ENCODE measurements at regions of chr10 and their contacts with region 1.

Region 1: DNA sequence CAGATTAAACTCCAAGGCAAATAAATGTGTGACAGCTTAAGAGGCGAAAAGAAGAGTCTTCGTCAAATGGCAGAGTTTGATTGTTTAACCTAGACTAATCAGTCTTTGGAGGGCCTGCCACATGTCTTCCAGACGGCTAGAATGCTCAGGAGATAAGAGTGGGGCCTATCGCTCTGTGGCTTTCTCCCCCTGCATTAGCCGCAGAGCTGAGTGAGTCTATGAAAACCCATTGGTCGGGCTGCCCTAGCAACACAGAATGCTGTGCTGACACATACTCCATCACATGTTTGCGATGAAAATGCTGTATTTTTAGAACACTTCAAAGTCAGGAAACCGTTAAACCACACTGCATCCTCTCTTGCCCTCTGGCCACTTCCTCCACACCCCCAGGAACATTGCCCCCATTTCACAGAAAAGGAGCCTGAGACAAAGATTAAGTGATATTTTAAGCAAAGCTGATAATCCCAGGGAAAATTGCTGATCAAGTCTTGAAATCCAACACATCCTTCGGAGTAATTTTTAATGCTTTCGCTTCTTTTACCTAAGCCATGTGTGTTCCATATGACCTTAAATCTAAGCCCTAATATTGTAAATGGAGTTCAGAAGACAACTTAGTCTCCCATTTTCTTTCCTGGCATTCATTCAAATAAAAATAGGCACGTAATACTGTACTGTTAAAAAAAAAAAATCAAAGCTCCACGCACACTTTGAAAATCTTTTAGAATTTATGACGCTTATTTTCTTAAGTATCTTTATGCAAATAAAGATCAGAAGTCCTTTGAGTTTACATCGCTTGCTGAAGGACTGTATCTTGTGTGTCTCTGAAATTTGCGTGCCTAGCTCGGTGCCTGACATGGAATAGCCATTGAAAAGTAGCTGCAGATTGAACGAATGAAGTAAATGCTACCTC is 161.2 kb downstream of the CELF2 start:
- DNase-seq: peak; percentile 68 to 96 (median 76)
- ATAC-seq: peak; percentile 72
- H3K4me3 ChIP-seq: peak overlapping the region; percentile 39
- H3K4me3 Mint-ChIP-seq: peak overlapping the region; percentile 86
- H3K27ac ChIP-seq: peak overlapping the region; percentile 75 to 84
- H3K27ac Mint-ChIP-seq: no peak overlapping the region
- H3K4me1 ChIP-seq: peaks cover 91% of the 10 kb centered on the region
- H3K4me1 Mint-ChIP-seq: peaks cover 30% of the 10 kb centered on the region
- H3K27me3 ChIP-seq: no peaks in the 10 kb centered on the region
- H3K27me3 Mint-ChIP-seq: no peaks in the 10 kb centered on the region
- CTCF ChIP-seq: no peak

Region 2: GRCh38 chr10:11074536-11075267 is 104.2 kb before region 1 on chr10:
- CTCF ChIA-PET with region 1: no interaction called
- POLR2A ChIA-PET with region 1: no interaction called
- intact Hi-C with region 1: no loop called
- DNase-seq: no peak
- ATAC-seq: no peak
- H3K4me3 ChIP-seq: no peak overlapping the region
- H3K4me3 Mint-ChIP-seq: no peak overlapping the region
- H3K27ac ChIP-seq: no peak overlapping the region
- H3K27ac Mint-ChIP-seq: no peak overlapping the region
- H3K4me1 ChIP-seq: no peaks in the 10 kb centered on the region
- H3K4me1 Mint-ChIP-seq: no peaks in the 10 kb centered on the region
- H3K27me3 ChIP-seq: no peaks in the 10 kb centered on the region
- H3K27me3 Mint-ChIP-seq: no peaks in the 10 kb centered on the region
- CTCF ChIP-seq: no peak

Region 3: DNA sequence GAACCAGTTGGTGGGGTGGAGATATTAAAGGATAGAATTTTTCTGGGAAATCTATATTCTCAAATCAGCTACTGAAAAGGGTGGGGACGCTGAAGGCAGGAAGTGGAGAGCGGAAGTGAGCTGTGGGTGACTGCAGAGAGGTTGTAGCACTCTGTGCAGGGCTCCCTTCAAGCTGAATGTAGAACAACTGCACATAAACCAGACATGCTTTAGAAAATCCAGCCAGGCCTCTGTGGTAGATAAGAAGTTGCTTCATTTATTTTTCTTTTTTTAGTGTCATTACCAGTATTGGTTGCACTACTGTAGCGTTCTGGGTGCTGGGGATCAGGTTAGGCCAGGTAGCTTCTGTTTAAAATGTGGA is 33.4 kb before region 1 on chr10:
- CTCF ChIA-PET with region 1: interaction called, 10 read pairs
- POLR2A ChIA-PET with region 1: interaction called, 1,077 read pairs
- intact Hi-C with region 1: loop called in 1 of 2 experiments (anchors 1 kb)
- DNase-seq: peak; percentile 47 to 89 (median 64)
- ATAC-seq: peak; percentile 63
- H3K4me3 ChIP-seq: peak overlapping the region; percentile 15
- H3K4me3 Mint-ChIP-seq: peak overlapping the region; percentile 73
- H3K27ac ChIP-seq: peak overlapping the region; percentile 89 to 91
- H3K27ac Mint-ChIP-seq: peak overlapping the region; percentile 97
- H3K4me1 ChIP-seq: peaks cover 94% of the 10 kb centered on the region
- H3K4me1 Mint-ChIP-seq: peaks cover 97% of the 10 kb centered on the region
- H3K27me3 ChIP-seq: no peaks in the 10 kb centered on the region
- H3K27me3 Mint-ChIP-seq: no peaks in the 10 kb centered on the region
- CTCF ChIP-seq: no peak

Region 4: GRCh38 chr10:11209830-11210181 is 30.9 kb after region 1 on chr10:
- CTCF ChIA-PET with region 1: interaction called, 4 read pairs
- POLR2A ChIA-PET with region 1: interaction called, 18 read pairs
- intact Hi-C with region 1: loop called in 1 of 2 experiments (anchors 5 kb)
- DNase-seq: peak in 2 of 14 experiments; percentile 51 to 58
- ATAC-seq: peak; percentile 11
- H3K4me3 ChIP-seq: peak overlapping the region; percentile 22
- H3K4me3 Mint-ChIP-seq: peak overlapping the region; percentile 82
- H3K27ac ChIP-seq: peak overlapping the region; percentile 43 to 60
- H3K27ac Mint-ChIP-seq: peak overlapping the region; percentile 81
- H3K4me1 ChIP-seq: peaks cover 84% of the 10 kb centered on the region
- H3K4me1 Mint-ChIP-seq: peaks cover 98% of the 10 kb centered on the region
- H3K27me3 ChIP-seq: no peaks in the 10 kb centered on the region
- H3K27me3 Mint-ChIP-seq: no peaks in the 10 kb centered on the region
- CTCF ChIP-seq: no peak

Region 5: GRCh38 chr10:11236234-11236633 is 57.4 kb after region 1 on chr10:
- CTCF ChIA-PET with region 1: interaction called, 3 read pairs
- POLR2A ChIA-PET with region 1: interaction called, 8 read pairs
- intact Hi-C with region 1: loop called in 1 of 2 experiments (anchors 2 kb)
- DNase-seq: peak in 5 of 14 experiments; percentile 23 to 71 (median 61)
- ATAC-seq: peak; percentile 76
- H3K4me3 ChIP-seq: no peak overlapping the region
- H3K4me3 Mint-ChIP-seq: peak overlapping the region; percentile 51
- H3K27ac ChIP-seq: peak overlapping the region; percentile 43 to 47
- H3K27ac Mint-ChIP-seq: no peak overlapping the region
- H3K4me1 ChIP-seq: peaks cover 63% of the 10 kb centered on the region
- H3K4me1 Mint-ChIP-seq: peaks cover 68% of the 10 kb centered on the region
- H3K27me3 ChIP-seq: no peaks in the 10 kb centered on the region
- H3K27me3 Mint-ChIP-seq: no peaks in the 10 kb centered on the region
- CTCF ChIP-seq: no peak

Region 6: GRCh38 chr10:11560076-11560709 is 381.3 kb after region 1 on chr10:
- CTCF ChIA-PET with region 1: no interaction called
- POLR2A ChIA-PET with region 1: no interaction called
- intact Hi-C with region 1: no loop called
- DNase-seq: peak in 3 of 14 experiments; percentile 3 to 31 (median 30)
- ATAC-seq: no peak
- H3K4me3 ChIP-seq: no peak overlapping the region
- H3K4me3 Mint-ChIP-seq: no peak overlapping the region
- H3K27ac ChIP-seq: no peak overlapping the region
- H3K27ac Mint-ChIP-seq: no peak overlapping the region
- H3K4me1 ChIP-seq: no peaks in the 10 kb centered on the region
- H3K4me1 Mint-ChIP-seq: no peaks in the 10 kb centered on the region
- H3K27me3 ChIP-seq: no peaks in the 10 kb centered on the region
- H3K27me3 Mint-ChIP-seq: no peaks in the 10 kb centered on the region
- CTCF ChIP-seq: no peak

Measured in CD4-positive, alpha-beta T cell (primary cell).